ENCODE measurements at regions of chr5 and their contacts with region 1.

Region 1: GRCh38 chr5:171907725-171908343 is 98.6 kb downstream of the FBXW11 start:
- DNase-seq: peak in 1 of 2 donors; percentile 47
- ATAC-seq: peak; percentile 47 to 83 (median 78)
- H3K4me3 ChIP-seq: no peak overlapping the region
- H3K27ac ChIP-seq: no peak overlapping the region
- H3K4me1 ChIP-seq: peaks cover 3 to 39% (median 30%) of the 10 kb centered on the region in 9 donors
- H3K27me3 ChIP-seq: no peaks in the 10 kb centered on the region
- CTCF ChIP-seq: peak; percentile 53 to 87 (median 81)

Region 2: DNA sequence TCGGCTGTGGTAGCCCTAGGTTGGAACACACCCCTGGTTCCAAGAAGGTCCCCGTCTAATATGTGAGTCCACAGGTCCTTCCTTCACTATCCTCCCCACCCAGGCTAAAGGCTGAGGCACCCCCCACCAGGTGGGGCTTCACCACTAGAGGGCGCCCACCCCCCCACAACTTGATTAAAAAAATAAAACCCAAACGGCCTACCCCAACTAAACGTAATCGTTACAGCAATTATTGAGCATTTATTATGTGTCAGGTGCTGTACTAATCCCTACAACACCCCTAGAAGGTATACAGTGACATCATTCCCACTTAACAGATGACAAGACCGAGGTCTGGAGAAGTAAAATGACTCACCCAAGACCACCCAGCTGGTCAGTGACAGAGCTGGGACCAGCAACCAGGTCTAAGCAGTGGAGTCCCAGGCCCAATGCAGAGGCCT is 423.4 kb before region 1 on chr5:
- intact Hi-C with region 1: loop called in 1 of 10 experiments (anchors 10 kb)
- DNase-seq: no peak
- ATAC-seq: peak in 6 of 8 donors; percentile 27 to 54 (median 41)
- H3K4me3 ChIP-seq: no peak overlapping the region
- H3K27ac ChIP-seq: peak overlapping the region in 3 of 10 donors; percentile 62 to 78 (median 69)
- H3K4me1 ChIP-seq: peaks cover 0 to 16% (median 9%) of the 10 kb centered on the region in 9 donors
- H3K27me3 ChIP-seq: no peaks in the 10 kb centered on the region
- CTCF ChIP-seq: peak; percentile 46 to 79 (median 69)

Region 3: DNA sequence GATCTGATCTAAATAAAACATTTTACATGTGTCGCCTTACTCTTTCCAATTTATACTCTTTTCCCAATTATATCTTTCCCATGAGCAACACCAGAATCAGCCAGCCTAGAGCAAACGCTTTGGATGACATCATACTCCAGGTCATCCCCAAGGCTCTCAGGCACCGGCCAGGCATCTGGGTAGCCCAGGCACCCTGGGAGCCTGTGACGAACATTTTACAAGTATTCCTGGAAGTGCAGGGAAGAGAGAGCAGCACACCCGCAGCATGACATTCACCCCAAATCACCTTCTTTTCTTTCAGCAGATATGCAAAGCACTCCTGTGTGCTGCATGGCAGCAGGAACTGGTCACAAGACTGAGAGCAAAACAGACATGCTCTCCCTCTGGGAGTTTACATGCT is 197.9 kb before region 1 on chr5:
- intact Hi-C with region 1: no loop called
- DNase-seq: peak; percentile 36 to 67
- ATAC-seq: peak; percentile 81 to 98 (median 96)
- H3K4me3 ChIP-seq: no peak overlapping the region
- H3K27ac ChIP-seq: peak overlapping the region; percentile 37 to 88 (median 72)
- H3K4me1 ChIP-seq: peaks cover 0 to 17% (median 4%) of the 10 kb centered on the region in 9 donors
- H3K27me3 ChIP-seq: no peaks in the 10 kb centered on the region
- CTCF ChIP-seq: no peak

Region 4: DNA sequence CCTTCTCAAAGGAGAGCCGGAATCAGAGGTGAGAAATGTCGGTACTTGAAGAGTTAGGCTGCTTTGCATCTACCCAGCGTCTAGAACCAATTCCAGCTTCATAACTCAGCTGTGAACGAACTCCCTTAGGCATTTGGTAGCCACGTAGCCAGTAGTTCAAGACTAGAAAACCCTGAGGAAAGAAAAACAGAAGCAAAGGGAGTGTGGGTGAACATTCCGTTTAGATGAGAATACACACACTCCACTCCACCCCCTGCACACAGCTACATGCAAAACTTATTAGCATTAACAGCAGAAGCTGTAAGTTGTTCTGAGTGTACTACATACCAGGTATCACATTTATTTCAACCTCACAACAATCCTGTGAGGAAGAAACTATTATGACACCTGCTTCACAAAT is 43.9 kb before region 1 on chr5:
- intact Hi-C with region 1: loop called in 1 of 10 experiments (anchors 5 kb)
- DNase-seq: no peak
- ATAC-seq: peak in 2 of 8 donors; percentile 47 to 48
- H3K4me3 ChIP-seq: no peak overlapping the region
- H3K27ac ChIP-seq: no peak overlapping the region
- H3K4me1 ChIP-seq: peaks cover 0 to 19% (median 2%) of the 10 kb centered on the region in 9 donors
- H3K27me3 ChIP-seq: no peaks in the 10 kb centered on the region
- CTCF ChIP-seq: no peak

Region 5: GRCh38 chr5:172035039-172035438 is 127.2 kb after region 1 on chr5:
- intact Hi-C with region 1: loop called (anchors 1 to 5 kb)
- DNase-seq: no peak
- ATAC-seq: no peak
- H3K4me3 ChIP-seq: no peak overlapping the region
- H3K27ac ChIP-seq: no peak overlapping the region
- H3K4me1 ChIP-seq: peaks cover 0 to 5% (median 0%) of the 10 kb centered on the region in 9 donors
- H3K27me3 ChIP-seq: no peaks in the 10 kb centered on the region
- CTCF ChIP-seq: no peak